ENCODE measurements at regions of chr1 and their contacts with region 1.

Region 1: GRCh38 chr1:64421377-64421776 is 48.6 kb upstream of the CACHD1 start:
- DNase-seq: no peak
- H3K4me3 ChIP-seq: no peak overlapping the region
- H3K27ac ChIP-seq: no peak overlapping the region
- H3K4me1 ChIP-seq: no peaks in the 10 kb centered on the region
- H3K27me3 ChIP-seq: no peaks in the 10 kb centered on the region
- CTCF ChIP-seq: no peak

Region 2: GRCh38 chr1:64598100-64598571 is 176.8 kb after region 1 on chr1:
- CTCF ChIA-PET with region 1: no interaction called
- POLR2A ChIA-PET with region 1: interaction called, 14 read pairs
- intact Hi-C with region 1: no loop called
- DNase-seq: peak; percentile 31 to 93
- H3K4me3 ChIP-seq: peak overlapping the region; percentile 24; the same call in 1 of the 2 replicates
- H3K27ac ChIP-seq: peak overlapping the region; percentile 8; the same call in 1 of the 2 replicates
- H3K4me1 ChIP-seq: peaks cover 36% of the 10 kb centered on the region
- H3K27me3 ChIP-seq: no peaks in the 10 kb centered on the region
- CTCF ChIP-seq: no peak